ENCODE measurements at regions of chr5 and their contacts with region 1.

Region 1: DNA sequence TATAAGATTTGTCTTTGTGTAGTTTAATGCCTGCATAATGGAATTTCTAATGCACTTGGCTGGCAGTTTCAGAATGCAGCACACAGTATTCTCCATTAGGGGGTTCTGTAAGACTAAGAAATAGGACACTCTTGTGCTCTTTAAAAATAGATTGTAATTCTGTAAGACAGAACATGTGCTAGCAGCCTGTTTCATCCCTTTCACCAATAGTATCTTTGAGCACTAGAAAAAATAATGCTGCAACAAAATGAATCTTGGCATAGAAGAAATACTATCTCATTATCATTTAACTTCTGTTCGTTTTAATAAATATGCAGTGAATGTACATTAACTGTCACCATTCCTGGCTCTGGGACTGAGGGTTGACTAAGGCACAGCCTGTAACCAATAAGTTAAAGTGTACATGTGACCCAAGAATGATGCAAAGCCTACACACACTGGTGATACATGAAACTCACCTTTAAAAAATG is 23.8 kb upstream of the ZNF622 start:
- DNase-seq: no peak

Region 2: DNA sequence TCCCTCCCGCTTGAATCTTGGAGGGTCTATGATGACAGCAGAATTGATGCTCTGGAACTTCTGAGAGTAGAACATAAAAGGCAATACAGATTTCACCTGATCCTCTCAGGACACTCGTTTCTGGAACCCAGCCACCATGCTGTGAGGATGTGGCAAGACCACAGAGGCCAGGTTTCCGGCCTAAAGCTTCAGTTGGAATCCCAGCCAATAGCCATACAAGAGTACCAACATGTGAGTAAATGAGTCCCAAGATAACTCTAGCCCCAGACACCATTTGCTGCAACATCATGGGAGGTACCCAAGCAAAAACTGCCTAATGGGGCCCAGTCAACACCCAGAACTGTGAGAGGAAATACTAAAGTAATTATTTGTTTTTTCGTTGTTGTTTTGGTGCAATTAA is 244.1 kb before region 1 on chr5:
- intact Hi-C with region 1: no loop called
- DNase-seq: no peak

Region 3: GRCh38 chr5:16552666-16553343 is 63.4 kb after region 1 on chr5:
- intact Hi-C with region 1: loop called (anchors 1 kb)
- DNase-seq: peak; percentile 67 to 97 (median 84)

Region 4: GRCh38 chr5:16666883-16667398 is 177.6 kb after region 1 on chr5:
- intact Hi-C with region 1: loop called (anchors 1 kb)
- DNase-seq: peak in 7 of 10 donors; percentile 46 to 93 (median 53)

Measured in posterior cingulate gyrus (tissue), 11 donors.